Breast epithelium (tissue), 4 donors: ENCODE measurements at regions of chr19 and their contacts with region 1.

Region 1: GRCh38 chr19:19619849-19620210 is 1.3 kb upstream of the PBX4 start:
- DNase-seq: no peak
- H3K4me3 ChIP-seq: no peak overlapping the region
- H3K27ac ChIP-seq: no peak overlapping the region
- H3K4me1 ChIP-seq: peaks cover 0 to 4% of the 10 kb centered on the region in 2 donors
- H3K27me3 ChIP-seq: no peaks in the 10 kb centered on the region
- CTCF ChIP-seq: no peak
- POLR2A ChIP-seq: no peak

Region 2: DNA sequence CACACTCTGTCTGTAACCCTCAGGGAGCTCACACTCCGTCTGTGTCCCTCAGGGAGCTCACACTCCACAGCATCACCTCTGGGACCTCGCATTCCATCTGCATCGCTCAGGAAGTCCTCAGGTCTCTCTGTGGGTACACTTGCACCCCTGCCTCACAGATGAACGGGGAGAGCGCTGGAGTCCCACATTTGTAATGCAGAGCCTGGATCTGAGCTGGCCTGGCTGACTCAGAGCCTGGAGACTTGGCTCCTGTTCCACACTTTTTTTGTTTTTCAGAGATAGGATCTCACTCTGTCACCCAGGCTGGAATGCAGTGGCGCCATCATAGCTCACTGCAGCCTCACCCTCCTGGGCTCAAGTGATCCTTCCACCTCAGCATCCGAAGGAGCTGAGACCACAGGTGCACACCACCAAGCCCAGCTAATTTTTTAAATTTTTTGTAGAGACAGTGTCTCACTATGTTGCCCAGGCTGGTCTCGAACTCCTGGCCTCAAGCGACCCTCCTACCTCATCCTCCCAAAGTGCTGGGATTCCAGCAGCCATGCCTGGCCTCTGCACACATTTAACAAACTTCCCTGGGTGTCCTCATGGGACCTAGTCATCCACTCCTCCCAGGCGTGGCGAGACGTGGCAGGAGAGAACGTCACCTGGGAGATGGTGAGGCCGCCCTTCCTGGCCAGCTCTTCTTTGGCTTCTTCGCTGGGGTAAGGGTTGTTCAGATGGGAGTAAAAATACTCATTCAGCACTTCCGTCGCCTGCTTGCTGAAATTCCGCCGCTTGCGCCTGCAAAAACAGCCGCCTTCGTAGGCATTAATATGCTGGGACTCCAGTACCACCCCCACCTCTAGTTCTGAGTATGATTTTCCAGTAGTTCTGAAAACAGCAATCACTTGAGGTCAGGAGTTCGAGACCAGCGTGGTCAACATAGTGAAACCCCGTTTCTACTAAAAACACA is 50.8 kb before region 1 on chr19:
- intact Hi-C with region 1: loop called (anchors 2 kb)
- DNase-seq: no peak
- H3K4me3 ChIP-seq: no peak overlapping the region
- H3K27ac ChIP-seq: no peak overlapping the region
- H3K4me1 ChIP-seq: no peaks in the 10 kb centered on the region
- H3K27me3 ChIP-seq: no peaks in the 10 kb centered on the region
- CTCF ChIP-seq: no peak
- POLR2A ChIP-seq: no peak

Region 3: DNA sequence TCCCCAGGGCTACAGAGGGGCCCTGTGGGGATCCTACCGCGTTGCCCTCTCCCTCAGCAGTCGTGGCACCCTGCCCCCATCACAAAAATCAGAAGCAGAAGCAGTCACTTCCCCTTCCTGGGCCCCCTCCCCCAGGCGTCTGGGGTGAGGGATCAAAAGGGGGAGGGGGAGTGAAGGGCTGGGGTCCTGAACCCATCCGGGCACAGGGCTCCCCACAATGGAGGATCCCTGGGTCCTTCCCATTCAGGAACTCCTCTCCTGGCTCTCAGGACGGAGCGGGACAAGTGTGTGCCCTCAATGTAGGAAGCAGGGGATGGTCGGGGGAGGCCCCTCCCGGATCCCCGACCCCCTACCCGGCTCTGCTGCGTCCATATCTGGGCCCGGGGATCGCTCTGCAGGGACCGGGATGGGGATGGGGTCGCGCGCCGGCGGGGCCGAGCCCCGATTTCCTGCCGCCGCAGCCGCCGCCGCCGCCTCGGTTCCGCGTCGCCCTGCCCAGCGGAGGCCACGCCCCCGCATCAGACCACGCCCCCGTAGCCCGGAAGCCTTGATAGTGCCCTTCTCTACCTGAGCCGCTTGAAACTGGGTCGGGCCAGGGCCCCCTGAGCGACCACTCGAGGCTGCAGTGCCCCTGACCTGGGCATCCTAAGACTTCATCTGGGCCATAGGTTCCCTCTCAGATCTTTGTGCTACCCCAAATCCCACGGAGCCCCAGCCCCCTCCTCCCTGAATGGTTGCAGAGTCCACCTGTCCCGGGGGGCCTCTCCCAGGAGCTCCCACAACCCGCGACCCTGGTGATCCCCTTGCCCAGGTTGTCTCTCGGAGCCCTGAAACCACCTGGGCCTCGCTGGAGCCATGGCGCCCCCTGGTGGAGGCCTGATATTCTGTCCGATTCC is 23.6 kb after region 1 on chr19 and contains the start of gene GMIP:
- intact Hi-C with region 1: no loop called
- DNase-seq: peak; percentile 64 to 75
- H3K4me3 ChIP-seq: peak within 1 kb of the TSS; percentile 68 to 85 (median 78)
- H3K27ac ChIP-seq: peak within 1 kb of the TSS; percentile 63 to 80
- H3K4me1 ChIP-seq: no peaks in the 10 kb centered on the region
- H3K27me3 ChIP-seq: no peaks in the 10 kb centered on the region
- CTCF ChIP-seq: peak; percentile 76 to 89 (median 88)
- POLR2A ChIP-seq: no peak
- total RNA-seq, gene GMIP: 7.9 to 10.4 (median 8.5) TPM

Region 4: DNA sequence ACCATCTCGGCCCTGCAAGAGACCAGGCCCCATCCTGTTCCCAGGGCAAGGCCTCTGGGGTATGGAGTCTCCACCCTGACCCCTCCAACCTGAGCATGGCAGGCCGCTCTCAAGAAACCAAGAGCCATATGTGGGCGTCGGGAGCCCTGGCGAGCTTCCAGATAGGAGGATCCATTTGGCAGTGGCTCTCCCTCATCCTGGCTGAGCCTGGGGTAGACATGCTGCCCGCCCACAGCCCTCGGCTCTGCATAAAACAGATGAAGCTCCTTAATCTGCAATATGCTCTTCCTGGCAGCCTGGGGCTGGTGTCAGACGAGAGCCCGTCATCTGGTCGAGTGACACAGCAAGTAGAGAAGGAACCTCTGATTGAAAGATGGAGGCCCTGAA is 37.6 kb after region 1 on chr19:
- intact Hi-C with region 1: no loop called
- DNase-seq: no peak
- H3K4me3 ChIP-seq: no peak overlapping the region
- H3K27ac ChIP-seq: no peak overlapping the region
- H3K4me1 ChIP-seq: peaks cover 5 to 11% of the 10 kb centered on the region in 2 donors
- H3K27me3 ChIP-seq: no peaks in the 10 kb centered on the region
- CTCF ChIP-seq: no peak
- POLR2A ChIP-seq: no peak